HepG2 (cell line): ENCODE measurements at regions of chr13 and their contacts with region 1.

Region 1: DNA sequence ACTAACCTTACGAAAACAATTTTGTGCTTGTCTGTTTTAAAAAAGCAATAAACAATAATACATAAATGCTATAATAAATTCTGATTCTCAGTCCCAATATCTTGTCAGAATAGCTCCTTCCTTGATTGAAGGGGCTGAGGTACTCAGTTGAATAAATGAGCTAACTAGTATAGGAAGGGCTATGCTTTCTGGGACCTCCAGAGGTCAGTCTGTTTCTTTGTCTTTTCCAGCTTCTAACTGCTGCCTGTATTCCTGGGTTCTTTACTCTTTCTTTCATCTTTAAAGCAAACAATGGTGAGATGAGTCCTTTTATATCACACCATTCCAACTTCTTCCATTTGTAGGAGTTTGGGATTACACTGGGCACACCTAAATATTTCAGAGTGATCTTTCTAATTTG is 1297.0 kb upstream of the ATXN8OS start:
- DNase-seq: peak; percentile 5
- ATAC-seq: peak; percentile 74
- H3K4me3 ChIP-seq: no peak overlapping the region
- H3K27ac ChIP-seq: no peak overlapping the region
- H3K4me1 ChIP-seq: no peaks in the 10 kb centered on the region
- H3K27me3 ChIP-seq: no peaks in the 10 kb centered on the region
- CTCF ChIP-seq: 0 out of 2 replicates have a peak, but pooled peaks have one; percentile 25
- EP300 ChIP-seq: no peak
- POLR2A ChIP-seq: no peak
- RAD21 ChIP-seq: no peak

Region 2: DNA sequence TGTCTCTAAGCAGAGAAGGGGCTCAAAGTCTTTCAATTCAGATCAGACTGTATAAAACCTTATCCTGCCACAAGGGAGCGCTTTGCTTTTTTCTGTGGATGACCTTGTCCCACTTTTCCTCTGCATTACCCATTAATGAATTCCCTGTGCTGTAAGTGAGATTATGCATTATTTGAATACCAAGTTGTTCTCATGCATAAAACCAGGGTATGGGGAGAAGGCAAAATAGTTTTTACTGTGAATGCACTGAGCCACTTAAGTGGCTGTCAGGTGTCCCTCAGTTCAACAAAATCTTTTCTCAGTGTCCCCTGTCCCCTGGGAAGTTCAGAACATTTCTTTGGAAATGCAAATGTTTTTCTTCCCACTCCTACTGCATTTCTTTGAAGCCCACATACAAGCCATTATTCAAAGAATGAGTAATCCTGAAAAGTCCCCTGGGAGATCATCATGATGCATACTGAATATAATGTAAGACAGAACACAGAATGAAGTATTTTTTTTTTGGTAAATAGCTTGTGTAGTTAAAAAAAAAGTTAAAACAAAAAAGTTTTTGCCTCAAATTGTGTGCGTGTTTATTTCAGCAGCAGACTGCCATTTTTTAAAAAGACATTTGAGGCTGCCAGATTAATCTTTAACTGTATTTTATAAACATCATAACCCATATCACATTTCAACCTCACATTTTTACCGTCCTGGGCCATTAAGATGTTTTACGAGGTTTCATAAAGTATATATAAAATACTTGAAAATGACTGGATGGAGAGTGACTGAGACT is 1073.8 kb before region 1 on chr13:
- CTCF ChIA-PET with region 1: no interaction called
- POLR2A ChIA-PET with region 1: no interaction called
- in situ Hi-C with region 1: no loop called
- intact Hi-C with region 1: no loop called
- DNase-seq: peak; percentile 5
- ATAC-seq: peak; percentile 73
- H3K4me3 ChIP-seq: no peak overlapping the region
- H3K27ac ChIP-seq: no peak overlapping the region
- H3K4me1 ChIP-seq: no peaks in the 10 kb centered on the region
- H3K27me3 ChIP-seq: no peaks in the 10 kb centered on the region
- CTCF ChIP-seq: 0 out of 2 replicates have a peak, but pooled peaks have one; percentile 13
- EP300 ChIP-seq: no peak
- POLR2A ChIP-seq: no peak
- RAD21 ChIP-seq: no peak

Region 3: DNA sequence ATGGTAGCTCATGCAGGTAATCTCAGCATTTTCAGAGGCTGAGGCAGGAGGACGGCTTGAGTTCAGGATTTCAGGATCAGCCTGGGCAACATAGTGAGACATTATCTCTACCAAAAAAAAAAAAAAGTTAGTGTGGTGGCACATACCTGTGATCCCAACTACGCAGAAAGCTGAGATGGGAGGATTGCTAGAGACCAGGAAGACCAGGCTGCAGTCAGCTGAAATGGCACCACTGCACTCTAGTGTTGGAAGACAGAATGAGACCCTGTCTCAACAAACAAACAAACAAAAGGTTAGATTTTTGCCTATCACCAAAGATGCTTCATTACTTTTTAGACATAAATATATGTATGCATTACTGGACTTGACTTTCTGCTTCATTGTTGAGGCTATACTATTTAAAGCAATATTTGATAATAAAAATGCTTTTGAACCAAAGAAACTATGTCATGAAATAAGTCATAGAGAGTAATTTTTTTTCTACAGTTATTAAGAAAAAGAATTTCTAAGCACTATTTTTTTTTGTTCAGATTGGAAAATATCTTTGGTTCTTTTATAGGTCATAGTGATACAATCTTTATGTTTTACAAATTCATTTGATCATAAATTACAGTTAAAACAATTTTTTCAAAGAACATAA is 116.8 kb after region 1 on chr13:
- CTCF ChIA-PET with region 1: no interaction called
- POLR2A ChIA-PET with region 1: no interaction called
- in situ Hi-C with region 1: no loop called
- intact Hi-C with region 1: loop called (anchors 5 kb)
- DNase-seq: peak; percentile 12
- ATAC-seq: peak; percentile 93
- H3K4me3 ChIP-seq: no peak overlapping the region
- H3K27ac ChIP-seq: no peak overlapping the region
- H3K4me1 ChIP-seq: no peaks in the 10 kb centered on the region
- H3K27me3 ChIP-seq: no peaks in the 10 kb centered on the region
- CTCF ChIP-seq: peak; percentile 71
- EP300 ChIP-seq: no peak
- POLR2A ChIP-seq: no peak
- RAD21 ChIP-seq: no peak

Region 4: GRCh38 chr13:69324090-69324886 is 513.6 kb after region 1 on chr13:
- CTCF ChIA-PET with region 1: no interaction called
- POLR2A ChIA-PET with region 1: no interaction called
- in situ Hi-C with region 1: no loop called
- intact Hi-C with region 1: loop called (anchors 10 kb)
- DNase-seq: peak; percentile 3
- ATAC-seq: no peak
- H3K4me3 ChIP-seq: no peak overlapping the region
- H3K27ac ChIP-seq: no peak overlapping the region
- H3K4me1 ChIP-seq: no peaks in the 10 kb centered on the region
- H3K27me3 ChIP-seq: no peaks in the 10 kb centered on the region
- CTCF ChIP-seq: peak; percentile 26
- EP300 ChIP-seq: no peak
- POLR2A ChIP-seq: no peak
- RAD21 ChIP-seq: no peak

Region 5: GRCh38 chr13:69524459-69525155 is 713.9 kb after region 1 on chr13:
- CTCF ChIA-PET with region 1: no interaction called
- POLR2A ChIA-PET with region 1: no interaction called
- in situ Hi-C with region 1: no loop called
- intact Hi-C with region 1: loop called (anchors 10 kb)
- DNase-seq: no peak
- ATAC-seq: no peak
- H3K4me3 ChIP-seq: no peak overlapping the region
- H3K27ac ChIP-seq: no peak overlapping the region
- H3K4me1 ChIP-seq: no peaks in the 10 kb centered on the region
- H3K27me3 ChIP-seq: no peaks in the 10 kb centered on the region; a peak in 1 of 5 replicates
- CTCF ChIP-seq: no peak
- EP300 ChIP-seq: no peak
- POLR2A ChIP-seq: no peak
- RAD21 ChIP-seq: no peak